Naive thymus-derived CD4-positive, alpha-beta T cell (primary cell): ENCODE measurements at regions of chr3 and their contacts with region 1.

Region 1: GRCh38 chr3:187041362-187042307 is 97.7 kb downstream of the RPL39L start:
- DNase-seq: peak in 8 of 9 donors; percentile 38 to 77 (median 61)
- ATAC-seq: peak; percentile 93
- H3K4me3 ChIP-seq: peak overlapping the region; percentile 12
- H3K4me3 Mint-ChIP-seq: peak overlapping the region; percentile 56 to 88 (median 80)
- H3K27ac ChIP-seq: peak overlapping the region; percentile 67
- H3K27ac Mint-ChIP-seq: peak overlapping the region; percentile 93 to 99 (median 96)
- H3K4me1 ChIP-seq: peaks cover 41 to 79% of the 10 kb centered on the region in 2 donors
- H3K4me1 Mint-ChIP-seq: peaks cover 59 to 95% (median 84%) of the 10 kb centered on the region in 7 donors
- H3K27me3 ChIP-seq: no peaks in the 10 kb centered on the region
- H3K27me3 Mint-ChIP-seq: no peaks in the 10 kb centered on the region

Region 2: GRCh38 chr3:186798239-186798874 is 243.3 kb before region 1 on chr3:
- CTCF ChIA-PET with region 1: no interaction called
- POLR2A ChIA-PET with region 1: no interaction called
- intact Hi-C with region 1: no loop called
- DNase-seq: no peak
- ATAC-seq: no peak
- H3K4me3 ChIP-seq: no peak overlapping the region
- H3K4me3 Mint-ChIP-seq: no peak overlapping the region
- H3K27ac ChIP-seq: no peak overlapping the region
- H3K27ac Mint-ChIP-seq: peak overlapping the region in 2 of 9 donors; percentile 36 to 59
- H3K4me1 ChIP-seq: peaks cover 0 to 2% of the 10 kb centered on the region in 2 donors
- H3K4me1 Mint-ChIP-seq: peaks cover 6 to 31% (median 17%) of the 10 kb centered on the region in 7 donors
- H3K27me3 ChIP-seq: no peaks in the 10 kb centered on the region
- H3K27me3 Mint-ChIP-seq: no peaks in the 10 kb centered on the region

Region 3: DNA sequence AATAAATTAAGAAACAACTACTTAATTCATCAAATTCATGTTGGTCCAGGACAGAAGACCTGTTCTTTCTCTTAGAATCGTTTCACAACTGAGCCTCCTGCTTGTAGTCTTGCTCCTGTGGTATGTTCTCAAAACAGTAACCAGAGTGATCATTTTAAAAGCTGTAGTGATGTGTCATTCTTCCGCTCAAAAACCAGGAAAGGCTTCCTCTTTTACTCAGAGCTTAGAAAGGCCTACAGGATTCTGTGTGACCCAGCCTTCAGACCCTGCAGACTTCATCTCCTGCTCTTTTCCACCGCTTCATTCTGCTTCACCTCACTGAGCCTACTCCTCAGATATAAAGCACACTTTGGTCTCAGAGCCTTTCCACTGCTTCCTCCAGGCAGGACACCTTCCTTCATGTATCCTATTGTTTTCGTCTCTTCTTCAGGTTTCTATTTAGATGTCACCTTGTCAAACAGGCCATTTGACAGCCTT is 88.6 kb before region 1 on chr3:
- CTCF ChIA-PET with region 1: no interaction called
- POLR2A ChIA-PET with region 1: no interaction called
- intact Hi-C with region 1: loop called in 1 of 2 experiments (anchors 5 kb)
- DNase-seq: no peak
- ATAC-seq: peak; percentile 70
- H3K4me3 ChIP-seq: no peak overlapping the region
- H3K4me3 Mint-ChIP-seq: peak overlapping the region; percentile 0 to 76 (median 45)
- H3K27ac ChIP-seq: peak overlapping the region; percentile 6
- H3K27ac Mint-ChIP-seq: peak overlapping the region; percentile 18 to 91 (median 63)
- H3K4me1 ChIP-seq: peaks cover 13 to 52% of the 10 kb centered on the region in 2 donors
- H3K4me1 Mint-ChIP-seq: peaks cover 71 to 95% (median 83%) of the 10 kb centered on the region in 7 donors
- H3K27me3 ChIP-seq: no peaks in the 10 kb centered on the region
- H3K27me3 Mint-ChIP-seq: no peaks in the 10 kb centered on the region

Region 4: DNA sequence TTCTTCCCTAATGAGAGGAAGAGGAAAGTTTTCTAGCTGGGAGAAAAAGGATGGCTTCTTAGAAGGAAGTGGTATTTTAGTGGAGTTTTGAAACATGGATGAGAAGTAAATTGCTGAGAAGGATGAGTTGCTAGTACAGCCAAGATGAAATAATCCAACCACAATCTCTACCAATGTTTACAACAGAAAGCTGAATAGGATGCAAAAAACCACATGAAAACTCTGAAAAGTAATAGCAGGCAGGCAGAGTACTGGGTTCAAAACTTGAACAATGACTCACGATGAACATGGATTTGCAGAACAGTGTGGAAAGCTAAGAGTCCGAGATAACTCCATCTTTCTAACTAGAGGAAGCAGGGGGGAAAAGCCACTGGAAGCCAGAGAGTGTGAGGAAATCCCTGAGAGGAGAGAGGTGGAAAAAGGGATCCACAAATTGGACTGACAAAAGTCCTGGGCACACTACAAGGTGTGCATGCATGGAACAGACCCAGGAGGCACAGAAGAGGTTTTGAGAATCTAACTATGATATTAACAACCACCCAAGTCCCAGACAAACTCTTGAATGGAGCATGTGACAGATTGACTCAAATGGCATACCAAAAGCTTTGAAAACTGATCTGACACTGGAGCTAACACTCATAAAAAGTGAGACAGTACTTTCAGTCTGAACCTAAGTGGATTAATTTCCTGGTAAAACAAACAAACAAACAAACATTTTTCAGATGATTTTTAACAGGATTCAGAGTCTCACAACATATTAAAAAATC is 34.6 kb before region 1 on chr3:
- CTCF ChIA-PET with region 1: no interaction called
- POLR2A ChIA-PET with region 1: interaction called, 3 read pairs
- intact Hi-C with region 1: loop called (anchors 2 to 5 kb)
- DNase-seq: peak in 4 of 9 donors; percentile 43 to 62 (median 52)
- ATAC-seq: peak; percentile 70
- H3K4me3 ChIP-seq: no peak overlapping the region
- H3K4me3 Mint-ChIP-seq: peak overlapping the region in 9 of 10 donors; percentile 10 to 79 (median 60)
- H3K27ac ChIP-seq: no peak overlapping the region
- H3K27ac Mint-ChIP-seq: peak overlapping the region; percentile 5 to 89 (median 61)
- H3K4me1 ChIP-seq: peaks cover 31 to 32% of the 10 kb centered on the region in 2 donors
- H3K4me1 Mint-ChIP-seq: peaks cover 48 to 80% (median 66%) of the 10 kb centered on the region in 7 donors
- H3K27me3 ChIP-seq: no peaks in the 10 kb centered on the region
- H3K27me3 Mint-ChIP-seq: no peaks in the 10 kb centered on the region

Region 5: GRCh38 chr3:187051719-187052366 is 10.2 kb after region 1 on chr3:
- CTCF ChIA-PET with region 1: no interaction called
- POLR2A ChIA-PET with region 1: interaction called, 4 read pairs
- intact Hi-C with region 1: loop called in 1 of 2 experiments (anchors 1 kb)
- DNase-seq: no peak
- ATAC-seq: no peak
- H3K4me3 ChIP-seq: no peak overlapping the region
- H3K4me3 Mint-ChIP-seq: peak overlapping the region in 2 of 10 donors; percentile 9 to 87
- H3K27ac ChIP-seq: no peak overlapping the region
- H3K27ac Mint-ChIP-seq: peak overlapping the region in 7 of 9 donors; percentile 38 to 99 (median 56)
- H3K4me1 ChIP-seq: peaks cover 0 to 21% of the 10 kb centered on the region in 2 donors
- H3K4me1 Mint-ChIP-seq: peaks cover 53 to 87% (median 58%) of the 10 kb centered on the region in 7 donors
- H3K27me3 ChIP-seq: no peaks in the 10 kb centered on the region
- H3K27me3 Mint-ChIP-seq: no peaks in the 10 kb centered on the region

Region 6: GRCh38 chr3:187066228-187066995 is 24.8 kb after region 1 on chr3:
- CTCF ChIA-PET with region 1: interaction called, 4 read pairs
- POLR2A ChIA-PET with region 1: interaction called, 3 read pairs
- intact Hi-C with region 1: loop called in 1 of 2 experiments (anchors 1 kb)
- DNase-seq: peak in 7 of 9 donors; percentile 54 to 75 (median 67)
- ATAC-seq: peak; percentile 83
- H3K4me3 ChIP-seq: no peak overlapping the region
- H3K4me3 Mint-ChIP-seq: peak overlapping the region in 7 of 10 donors; percentile 18 to 42 (median 31)
- H3K27ac ChIP-seq: peak overlapping the region; percentile 14
- H3K27ac Mint-ChIP-seq: peak overlapping the region; percentile 61 to 92 (median 84)
- H3K4me1 ChIP-seq: peaks cover 13 to 38% of the 10 kb centered on the region in 2 donors
- H3K4me1 Mint-ChIP-seq: peaks cover 49 to 87% (median 79%) of the 10 kb centered on the region in 7 donors
- H3K27me3 ChIP-seq: no peaks in the 10 kb centered on the region
- H3K27me3 Mint-ChIP-seq: no peaks in the 10 kb centered on the region